ENCODE measurements at regions of chr2 and their contacts with region 1.

Region 1: GRCh38 chr2:200306196-200306930 is at the start of gene SPATS2L:
- DNase-seq: peak; percentile 80
- H3K4me3 ChIP-seq: peak within 1 kb of the TSS; percentile 75 to 88 (median 83)
- H3K27ac ChIP-seq: peak within 1 kb of the TSS; percentile 97
- H3K4me1 ChIP-seq: peaks cover 55% of the 10 kb centered on the region
- H3K27me3 ChIP-seq: no peaks in the 10 kb centered on the region
- CTCF ChIP-seq: no peak
- total RNA-seq, gene SPATS2L: 60.0 to 98.2 TPM

Region 2: DNA sequence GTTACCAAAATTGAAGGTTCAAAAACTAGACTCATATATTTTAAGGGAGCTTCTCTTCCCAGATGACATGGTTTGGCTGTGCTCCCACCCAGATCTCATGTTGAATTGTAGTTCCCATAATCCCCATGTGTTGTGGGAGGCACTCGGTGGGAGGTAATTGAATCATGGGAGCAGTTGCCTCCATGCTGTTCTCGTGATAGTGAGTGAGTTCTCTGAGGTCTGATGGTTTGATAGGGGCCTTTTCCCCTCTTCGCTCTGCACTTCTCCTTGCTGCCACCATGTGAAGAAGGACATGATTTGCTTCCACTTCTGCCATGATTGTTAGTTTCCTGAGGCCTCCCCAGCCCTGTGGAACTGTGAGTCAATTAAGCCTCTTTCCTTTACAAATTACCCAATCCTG is 210.9 kb before region 1 on chr2:
- CTCF ChIA-PET with region 1: no interaction called
- dilution Hi-C with region 1: no loop called
- in situ Hi-C with region 1: no loop called
- intact Hi-C with region 1: loop called (anchors 5 kb)
- DNase-seq: no peak
- H3K4me3 ChIP-seq: no peak overlapping the region
- H3K27ac ChIP-seq: no peak overlapping the region
- H3K4me1 ChIP-seq: no peaks in the 10 kb centered on the region
- H3K27me3 ChIP-seq: no peaks in the 10 kb centered on the region
- CTCF ChIP-seq: no peak

Region 3: DNA sequence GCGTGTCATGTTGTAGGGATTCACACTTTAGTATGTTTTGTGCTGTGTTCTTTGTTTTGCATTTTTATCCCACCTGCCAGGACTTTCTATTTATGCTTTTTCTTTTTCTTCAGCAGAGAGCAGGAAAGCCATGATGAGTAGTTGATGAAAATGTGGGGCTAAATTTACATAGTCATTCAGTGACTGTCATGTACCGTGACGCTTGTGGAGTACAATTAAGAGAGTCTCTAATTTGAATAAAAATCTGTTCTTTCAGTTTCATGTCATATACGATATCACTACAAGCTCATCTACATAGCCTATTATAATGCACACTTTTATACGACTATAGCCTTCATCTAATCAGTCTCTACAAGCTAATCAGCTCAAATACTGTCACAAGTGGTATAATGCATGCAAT is 112.6 kb before region 1 on chr2:
- CTCF ChIA-PET with region 1: no interaction called
- dilution Hi-C with region 1: no loop called
- in situ Hi-C with region 1: no loop called
- intact Hi-C with region 1: loop called (anchors 5 kb)
- DNase-seq: no peak
- H3K4me3 ChIP-seq: no peak overlapping the region
- H3K27ac ChIP-seq: no peak overlapping the region
- H3K4me1 ChIP-seq: no peaks in the 10 kb centered on the region
- H3K27me3 ChIP-seq: no peaks in the 10 kb centered on the region
- CTCF ChIP-seq: no peak

Region 4: DNA sequence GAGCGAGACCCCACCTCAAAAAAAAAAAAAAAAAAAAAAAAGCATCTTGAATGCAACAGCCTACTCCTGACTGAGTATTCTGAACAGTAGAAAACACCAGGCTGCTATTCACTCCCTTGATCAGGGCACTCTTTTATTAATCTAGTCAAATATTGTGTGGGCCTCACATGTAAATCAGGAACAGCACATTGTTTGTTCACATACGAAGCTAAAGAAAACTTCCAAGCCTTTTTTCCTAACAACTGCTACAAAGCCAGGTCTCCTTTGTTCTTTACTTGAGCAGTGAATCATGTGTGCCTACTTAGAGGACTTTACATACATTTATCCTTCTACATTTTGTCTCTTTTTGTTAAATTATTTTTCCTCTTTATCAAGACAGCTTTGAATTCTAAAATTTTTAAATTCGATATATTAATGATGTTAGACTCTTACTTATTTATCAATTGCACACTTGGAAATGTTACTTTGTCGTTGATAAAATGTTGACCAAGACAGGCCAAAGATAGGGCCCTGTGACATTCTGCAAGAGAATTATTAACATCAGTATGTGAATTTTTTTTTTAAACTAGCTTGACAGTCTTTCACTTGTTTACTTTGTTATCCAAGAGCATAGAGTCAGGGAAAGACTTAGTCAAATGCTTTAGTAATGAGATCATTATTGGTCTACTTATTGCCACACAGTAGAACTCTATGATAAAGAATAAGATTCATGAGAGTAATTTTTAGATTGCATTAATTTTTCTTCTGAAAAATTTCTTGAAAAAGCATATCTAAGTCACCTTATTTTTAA is 13.4 kb after region 1 on chr2:
- CTCF ChIA-PET with region 1: interaction called, 6 read pairs
- dilution Hi-C with region 1: no loop called
- in situ Hi-C with region 1: no loop called
- intact Hi-C with region 1: loop called (anchors 1 kb)
- DNase-seq: peak; percentile 51
- H3K4me3 ChIP-seq: no peak overlapping the region
- H3K27ac ChIP-seq: peak overlapping the region; percentile 83
- H3K4me1 ChIP-seq: peaks cover 49% of the 10 kb centered on the region
- H3K27me3 ChIP-seq: no peaks in the 10 kb centered on the region
- CTCF ChIP-seq: no peak

Region 5: DNA sequence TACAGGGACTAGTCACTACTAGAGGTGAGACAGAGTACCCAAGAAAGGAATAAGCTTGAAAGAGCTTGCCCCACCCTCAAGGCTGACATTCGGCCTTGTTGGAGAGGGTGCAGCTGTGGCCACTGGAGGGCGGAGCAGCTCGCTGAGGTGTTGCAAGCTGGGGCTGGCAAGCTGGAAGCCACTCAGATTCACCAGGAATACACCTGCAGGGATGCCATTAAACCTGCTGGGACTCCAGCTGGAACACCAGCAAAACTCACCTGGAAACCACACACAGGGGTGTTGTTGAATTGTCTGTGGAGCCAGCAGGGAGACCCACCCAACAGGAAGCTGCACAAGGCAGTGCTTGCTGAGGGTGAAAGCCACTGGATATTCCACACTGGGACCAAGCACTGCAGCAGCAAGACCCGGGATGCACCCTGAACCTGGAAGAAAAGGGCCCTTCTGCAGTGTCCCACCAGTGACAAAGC is 177.4 kb after region 1 on chr2:
- CTCF ChIA-PET with region 1: no interaction called
- dilution Hi-C with region 1: no loop called
- in situ Hi-C with region 1: no loop called
- intact Hi-C with region 1: loop called (anchors 5 kb)
- DNase-seq: peak; percentile 62
- H3K4me3 ChIP-seq: no peak overlapping the region
- H3K27ac ChIP-seq: no peak overlapping the region
- H3K4me1 ChIP-seq: peaks cover 27% of the 10 kb centered on the region
- H3K27me3 ChIP-seq: no peaks in the 10 kb centered on the region
- CTCF ChIP-seq: peak; percentile 59 to 81

Measured in mammary epithelial cell (primary cell).